ENCODE measurements at regions of chr2 and their contacts with region 1.

Region 1: GRCh38 chr2:1742681-1743395 is 1.5 kb downstream of the PXDN start:
- DNase-seq: peak; percentile 77 to 78
- ATAC-seq: peak; percentile 44 to 78 (median 68)
- H3K4me3 ChIP-seq: peak overlapping the region; percentile 23 to 87 (median 74)
- H3K27ac ChIP-seq: peak overlapping the region; percentile 81 to 97 (median 91)
- H3K4me1 ChIP-seq: peaks cover 0 to 65% (median 47%) of the 10 kb centered on the region in 9 donors
- H3K27me3 ChIP-seq: peaks cover 0 to 43% (median 11%) of the 10 kb centered on the region in 7 donors
- CTCF ChIP-seq: peak; percentile 23 to 73 (median 48)

Region 2: GRCh38 chr2:1591978-1592907 is 150.6 kb before region 1 on chr2:
- intact Hi-C with region 1: loop called in 8 of 10 experiments (anchors 2 to 10 kb)
- DNase-seq: peak; percentile 76 to 81
- ATAC-seq: peak; percentile 73 to 87 (median 84)
- H3K4me3 ChIP-seq: peak overlapping the region in 6 of 10 donors; percentile 27 to 41 (median 31)
- H3K27ac ChIP-seq: peak overlapping the region; percentile 2 to 84 (median 62)
- H3K4me1 ChIP-seq: peaks cover 5 to 54% (median 41%) of the 10 kb centered on the region in 9 donors
- H3K27me3 ChIP-seq: peaks cover 0 to 16% (median 0%) of the 10 kb centered on the region in 7 donors
- CTCF ChIP-seq: peak; percentile 45 to 84 (median 69)

Region 3: DNA sequence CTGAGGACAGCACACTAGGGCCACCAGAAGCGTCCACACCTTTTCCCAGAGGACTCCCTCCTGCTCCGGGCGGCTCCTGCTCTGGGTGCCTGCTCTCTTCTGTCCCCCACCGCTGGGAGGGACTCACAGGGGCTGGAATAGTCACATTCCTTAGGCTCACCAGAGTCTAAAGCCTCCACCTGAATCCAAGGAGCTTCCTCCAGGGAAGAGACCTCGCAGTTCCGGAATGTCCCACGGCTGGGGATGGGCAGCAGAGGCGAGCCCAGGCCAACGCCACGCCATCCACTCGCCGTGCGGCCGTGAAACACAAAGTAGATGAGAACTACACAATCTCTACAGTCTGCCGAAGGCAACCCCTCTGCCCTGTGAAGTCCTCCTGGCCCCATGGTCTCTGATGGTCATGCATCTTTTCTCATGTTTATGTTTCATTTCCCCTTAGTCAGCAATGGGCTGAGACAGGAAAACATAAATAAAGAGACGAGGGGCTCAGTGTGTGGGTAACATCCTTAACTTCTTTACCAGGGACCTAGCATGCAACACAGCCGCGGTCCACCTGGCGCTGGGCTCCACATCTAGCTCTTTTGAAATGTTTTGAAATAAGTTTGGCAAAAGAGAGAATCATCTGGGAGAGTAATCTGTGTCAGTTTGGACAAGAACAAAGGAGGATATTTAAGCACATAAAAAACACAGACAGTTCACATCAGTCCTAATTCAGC is 96.9 kb before region 1 on chr2:
- intact Hi-C with region 1: loop called in 4 of 10 experiments (anchors 5 to 10 kb)
- DNase-seq: no peak
- ATAC-seq: peak in 2 of 8 donors; percentile 6 to 22
- H3K4me3 ChIP-seq: no peak overlapping the region
- H3K27ac ChIP-seq: peak overlapping the region in 4 of 10 donors; percentile 37 to 56 (median 47)
- H3K4me1 ChIP-seq: peaks cover 0 to 37% (median 12%) of the 10 kb centered on the region in 9 donors
- H3K27me3 ChIP-seq: no peaks in the 10 kb centered on the region
- CTCF ChIP-seq: no peak

Region 4: DNA sequence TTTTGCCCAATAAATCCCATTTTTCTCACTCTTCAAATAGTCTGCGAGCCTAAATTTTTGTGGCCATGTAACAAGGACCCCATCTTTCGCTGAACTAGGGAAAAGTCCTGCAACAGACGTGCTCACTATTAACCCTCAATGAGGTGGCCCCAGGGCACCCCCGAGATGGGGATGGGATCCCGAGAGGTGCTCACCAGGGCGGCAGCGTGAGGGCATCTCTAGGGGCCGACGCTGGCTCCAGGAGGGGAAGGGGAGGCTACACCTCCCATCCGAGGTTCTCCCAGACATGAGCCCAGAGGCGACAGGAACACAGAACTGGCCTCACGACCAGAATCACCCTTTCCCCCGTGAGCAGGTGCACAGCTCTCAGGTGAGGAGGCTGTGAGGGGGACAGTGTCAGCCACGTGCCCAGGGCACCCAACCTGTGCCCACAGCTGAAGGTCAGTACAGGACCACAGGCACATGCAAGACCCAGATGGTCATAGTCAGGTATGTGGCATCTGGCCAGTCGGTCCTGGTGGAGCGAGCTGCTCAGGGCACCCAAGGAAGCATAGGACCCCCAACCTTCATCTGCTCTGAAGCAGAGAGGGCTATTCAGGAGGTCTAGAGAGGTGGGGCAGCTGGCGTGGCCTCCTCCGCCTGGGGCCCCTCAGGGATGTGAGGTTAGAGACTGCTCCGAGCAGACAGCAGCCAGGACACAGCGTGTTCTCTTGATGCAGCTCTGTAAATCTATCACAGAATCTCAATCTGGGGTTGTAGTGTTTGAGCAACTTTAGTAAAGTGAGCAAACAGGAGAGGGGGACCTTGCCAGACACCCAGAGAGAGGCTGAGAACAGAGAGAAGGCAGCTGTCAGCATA is 61.3 kb before region 1 on chr2:
- intact Hi-C with region 1: loop called in 1 of 10 experiments (anchors 2 kb)
- DNase-seq: no peak
- ATAC-seq: peak in 4 of 8 donors; percentile 11 to 42 (median 19)
- H3K4me3 ChIP-seq: no peak overlapping the region
- H3K27ac ChIP-seq: no peak overlapping the region
- H3K4me1 ChIP-seq: peaks cover 0 to 30% (median 4%) of the 10 kb centered on the region in 9 donors
- H3K27me3 ChIP-seq: peaks cover 0 to 5% (median 0%) of the 10 kb centered on the region in 7 donors
- CTCF ChIP-seq: no peak

Region 5: GRCh38 chr2:1717113-1717512 is 25.7 kb before region 1 on chr2:
- intact Hi-C with region 1: loop called in 1 of 10 experiments (anchors 2 kb)
- DNase-seq: peak; percentile 32 to 69
- ATAC-seq: peak in 7 of 8 donors; percentile 14 to 58 (median 43)
- H3K4me3 ChIP-seq: no peak overlapping the region
- H3K27ac ChIP-seq: peak overlapping the region; percentile 43 to 82 (median 74)
- H3K4me1 ChIP-seq: peaks cover 21 to 89% (median 75%) of the 10 kb centered on the region in 9 donors
- H3K27me3 ChIP-seq: no peaks in the 10 kb centered on the region
- CTCF ChIP-seq: no peak

Measured in heart right ventricle (tissue), 16 donors.